Naive thymus-derived CD4-positive, alpha-beta T cell (primary cell): ENCODE measurements at regions of chr2 and their contacts with region 1.

Region 1: GRCh38 chr2:25521665-25522387 is 151.6 kb downstream of the DTNB start:
- DNase-seq: peak in 7 of 9 donors; percentile 59 to 82 (median 72)
- ATAC-seq: peak; percentile 99
- H3K4me3 ChIP-seq: no peak overlapping the region
- H3K4me3 Mint-ChIP-seq: peak overlapping the region in 8 of 10 donors; percentile 4 to 77 (median 42)
- H3K27ac ChIP-seq: no peak overlapping the region
- H3K27ac Mint-ChIP-seq: peak overlapping the region in 8 of 9 donors; percentile 38 to 88 (median 66)
- H3K4me1 ChIP-seq: peaks cover 4 to 5% of the 10 kb centered on the region in 2 donors
- H3K4me1 Mint-ChIP-seq: peaks cover 0 to 25% (median 8%) of the 10 kb centered on the region in 7 donors
- H3K27me3 ChIP-seq: no peaks in the 10 kb centered on the region
- H3K27me3 Mint-ChIP-seq: no peaks in the 10 kb centered on the region

Region 2: DNA sequence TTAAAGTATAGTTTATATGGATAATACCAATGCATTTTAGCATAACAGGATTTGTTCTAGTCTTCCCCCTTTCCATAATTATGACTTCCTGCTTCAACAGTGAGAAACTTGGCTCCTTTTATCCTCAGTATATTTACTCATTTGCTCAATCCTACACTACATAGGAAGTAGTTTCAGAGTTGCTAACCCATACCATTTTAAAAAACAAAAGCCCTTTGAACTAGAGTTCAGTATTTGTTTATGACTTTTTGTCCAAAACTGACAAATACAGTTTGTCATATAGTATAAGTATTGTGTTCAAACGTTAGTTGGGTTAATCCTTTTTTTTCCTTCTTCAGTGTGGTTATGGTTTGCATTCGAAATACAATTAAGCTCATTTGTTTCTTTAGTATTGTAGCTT is 544.2 kb before region 1 on chr2:
- CTCF ChIA-PET with region 1: no interaction called
- POLR2A ChIA-PET with region 1: no interaction called
- intact Hi-C with region 1: loop called in 1 of 2 experiments (anchors 5 kb)
- DNase-seq: no peak
- ATAC-seq: no peak
- H3K4me3 ChIP-seq: no peak overlapping the region
- H3K4me3 Mint-ChIP-seq: no peak overlapping the region
- H3K27ac ChIP-seq: no peak overlapping the region
- H3K27ac Mint-ChIP-seq: peak overlapping the region in 2 of 9 donors; percentile 2 to 42
- H3K4me1 ChIP-seq: peaks cover 0 to 7% of the 10 kb centered on the region in 2 donors
- H3K4me1 Mint-ChIP-seq: peaks cover 1 to 22% (median 19%) of the 10 kb centered on the region in 7 donors
- H3K27me3 ChIP-seq: no peaks in the 10 kb centered on the region
- H3K27me3 Mint-ChIP-seq: peaks cover 0 to 3% (median 0%) of the 10 kb centered on the region in 5 donors

Region 3: GRCh38 chr2:25201265-25201664 is 320.6 kb before region 1 on chr2:
- CTCF ChIA-PET with region 1: interaction called, 3 read pairs
- POLR2A ChIA-PET with region 1: no interaction called
- intact Hi-C with region 1: loop called in 1 of 2 experiments (anchors 10 kb)
- DNase-seq: no peak
- ATAC-seq: no peak
- H3K4me3 ChIP-seq: no peak overlapping the region
- H3K4me3 Mint-ChIP-seq: no peak overlapping the region
- H3K27ac ChIP-seq: no peak overlapping the region
- H3K27ac Mint-ChIP-seq: peak overlapping the region in 1 of 9 donors; percentile 33
- H3K4me1 ChIP-seq: peaks cover 0 to 7% of the 10 kb centered on the region in 2 donors
- H3K4me1 Mint-ChIP-seq: peaks cover under 1 to 17% (median 14%) of the 10 kb centered on the region in 7 donors
- H3K27me3 ChIP-seq: no peaks in the 10 kb centered on the region
- H3K27me3 Mint-ChIP-seq: peaks cover 0 to 18% (median 0%) of the 10 kb centered on the region in 5 donors

Region 4: DNA sequence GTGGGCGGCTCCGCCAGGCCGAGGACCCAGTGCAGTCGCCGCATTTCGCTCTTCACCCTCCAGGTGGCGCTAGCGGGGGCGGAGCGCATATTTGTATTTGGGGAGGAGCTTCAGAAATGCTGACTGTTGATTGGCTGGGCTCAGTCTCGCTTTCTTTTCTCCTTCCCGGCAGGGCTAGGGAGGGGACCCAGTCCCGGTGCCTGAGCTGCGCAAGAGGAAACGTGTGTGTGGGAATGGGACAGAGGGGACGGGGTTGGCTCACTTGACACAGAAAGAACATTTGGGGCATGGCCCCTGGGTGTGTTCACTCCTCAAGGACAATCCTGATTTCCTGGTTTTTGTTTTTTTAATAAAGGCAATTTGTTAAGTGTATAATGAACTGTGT is 159.8 kb before region 1 on chr2:
- CTCF ChIA-PET with region 1: no interaction called
- POLR2A ChIA-PET with region 1: interaction called, 4 read pairs
- intact Hi-C with region 1: loop called (anchors 1 kb)
- DNase-seq: peak; percentile 86 to 99 (median 93)
- ATAC-seq: peak; percentile 98
- H3K4me3 ChIP-seq: peak overlapping the region; percentile 78
- H3K4me3 Mint-ChIP-seq: peak overlapping the region; percentile 83 to 95 (median 89)
- H3K27ac ChIP-seq: peak overlapping the region; percentile 81
- H3K27ac Mint-ChIP-seq: peak overlapping the region; percentile 84 to 96 (median 92)
- H3K4me1 ChIP-seq: peaks cover 3 to 4% of the 10 kb centered on the region in 2 donors
- H3K4me1 Mint-ChIP-seq: peaks cover 11 to 32% (median 25%) of the 10 kb centered on the region in 7 donors
- H3K27me3 ChIP-seq: no peaks in the 10 kb centered on the region
- H3K27me3 Mint-ChIP-seq: no peaks in the 10 kb centered on the region

Region 5: DNA sequence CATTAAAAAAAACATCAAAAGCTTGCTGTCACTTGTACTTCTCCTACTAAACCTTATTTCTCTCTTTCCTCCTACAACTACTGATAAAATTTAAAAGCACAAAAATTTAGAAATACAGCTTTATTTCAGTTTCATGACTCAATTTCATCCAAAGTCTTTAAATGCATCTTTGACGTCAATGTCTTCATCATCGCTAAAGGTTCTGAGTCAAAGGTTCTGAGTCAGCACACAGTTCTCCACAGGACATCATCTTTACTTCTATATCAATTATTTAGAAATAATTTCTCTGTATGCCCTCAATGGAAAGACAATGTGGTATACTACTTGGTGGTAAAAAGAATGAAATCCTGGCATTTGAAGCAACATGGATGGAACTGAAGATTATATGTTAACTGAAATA is 16.2 kb before region 1 on chr2:
- CTCF ChIA-PET with region 1: no interaction called
- POLR2A ChIA-PET with region 1: no interaction called
- intact Hi-C with region 1: no loop called
- DNase-seq: no peak
- ATAC-seq: no peak
- H3K4me3 ChIP-seq: no peak overlapping the region
- H3K4me3 Mint-ChIP-seq: no peak overlapping the region
- H3K27ac ChIP-seq: no peak overlapping the region
- H3K27ac Mint-ChIP-seq: peak overlapping the region in 1 of 9 donors; percentile 27
- H3K4me1 ChIP-seq: no peaks in the 10 kb centered on the region
- H3K4me1 Mint-ChIP-seq: peaks cover 0 to 2% (median 0%) of the 10 kb centered on the region in 7 donors
- H3K27me3 ChIP-seq: no peaks in the 10 kb centered on the region
- H3K27me3 Mint-ChIP-seq: peaks cover 0 to 2% (median 0%) of the 10 kb centered on the region in 5 donors

Region 6: GRCh38 chr2:25558262-25558661 is 36.4 kb after region 1 on chr2:
- CTCF ChIA-PET with region 1: no interaction called
- POLR2A ChIA-PET with region 1: no interaction called
- intact Hi-C with region 1: loop called in 1 of 2 experiments (anchors 1 kb)
- DNase-seq: peak in 6 of 9 donors; percentile 25 to 48 (median 32)
- ATAC-seq: peak; percentile 94
- H3K4me3 ChIP-seq: no peak overlapping the region
- H3K4me3 Mint-ChIP-seq: peak overlapping the region in 1 of 10 donors; percentile 44
- H3K27ac ChIP-seq: no peak overlapping the region
- H3K27ac Mint-ChIP-seq: peak overlapping the region in 3 of 9 donors; percentile 20 to 92 (median 41)
- H3K4me1 ChIP-seq: peaks cover 6 to 8% of the 10 kb centered on the region in 2 donors
- H3K4me1 Mint-ChIP-seq: peaks cover 17 to 56% (median 34%) of the 10 kb centered on the region in 7 donors
- H3K27me3 ChIP-seq: no peaks in the 10 kb centered on the region
- H3K27me3 Mint-ChIP-seq: no peaks in the 10 kb centered on the region